ENCODE measurements at regions of chr17 and their contacts with region 1.

Region 1: GRCh38 chr17:72725433-72726068 is 366.9 kb downstream of the SLC39A11 start:
- DNase-seq: peak; percentile 61 to 78 (median 72)
- ATAC-seq: peak; percentile 88
- H3K4me3 ChIP-seq: no peak overlapping the region
- H3K4me1 ChIP-seq: peaks cover 5% of the 10 kb centered on the region
- CTCF ChIP-seq: peak; percentile 75

Region 2: DNA sequence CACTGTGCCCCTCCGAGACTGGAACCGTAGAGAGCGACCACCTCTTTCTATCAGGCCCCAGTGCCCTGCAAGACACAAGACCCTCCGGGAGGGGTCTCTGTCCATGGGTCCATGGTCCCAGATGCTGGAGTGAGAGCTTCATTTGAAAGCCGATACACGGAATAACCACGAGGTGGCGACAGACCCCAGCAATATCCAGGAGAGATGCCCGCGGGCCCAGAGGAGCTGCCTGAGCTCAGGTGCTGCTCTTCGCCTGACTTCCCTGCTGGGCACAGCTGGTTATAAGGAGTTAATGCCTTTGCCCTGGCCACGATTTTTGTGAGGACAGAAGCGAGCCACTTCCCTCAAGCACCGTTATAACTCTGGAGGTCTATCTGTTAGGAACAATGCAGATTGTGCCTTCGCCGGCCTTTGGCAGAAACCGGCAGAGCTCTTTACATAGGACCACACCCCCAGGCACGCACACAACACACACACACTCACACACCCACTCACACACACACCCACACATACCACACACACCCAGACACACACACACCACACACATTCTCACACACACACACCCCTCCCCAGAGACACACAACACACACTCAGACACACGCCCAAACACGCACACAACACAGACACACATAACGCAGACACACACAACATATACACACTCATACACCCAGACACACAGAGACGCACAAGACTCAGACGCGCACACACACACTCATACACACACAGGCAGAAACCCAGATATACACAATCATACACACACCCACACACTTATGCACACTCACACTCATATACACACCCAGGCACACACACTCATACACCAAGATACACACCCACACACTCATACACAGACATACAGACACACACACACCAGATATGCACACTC is 168.4 kb before region 1 on chr17:
- intact Hi-C with region 1: loop called in 1 of 2 experiments (anchors 10 kb)
- DNase-seq: peak in 2 of 3 donors; percentile 68 to 77
- ATAC-seq: peak; percentile 57
- H3K4me3 ChIP-seq: no peak overlapping the region
- H3K4me1 ChIP-seq: peaks cover 10% of the 10 kb centered on the region
- CTCF ChIP-seq: peak; percentile 58

Region 3: GRCh38 chr17:73156166-73156840 is 430.8 kb after region 1 on chr17:
- intact Hi-C with region 1: loop called in 1 of 2 experiments (anchors 5 kb)
- DNase-seq: peak; percentile 67 to 80 (median 77)
- ATAC-seq: peak; percentile 96
- H3K4me3 ChIP-seq: no peak overlapping the region
- H3K4me1 ChIP-seq: no peaks in the 10 kb centered on the region
- CTCF ChIP-seq: peak; percentile 57

Region 4: DNA sequence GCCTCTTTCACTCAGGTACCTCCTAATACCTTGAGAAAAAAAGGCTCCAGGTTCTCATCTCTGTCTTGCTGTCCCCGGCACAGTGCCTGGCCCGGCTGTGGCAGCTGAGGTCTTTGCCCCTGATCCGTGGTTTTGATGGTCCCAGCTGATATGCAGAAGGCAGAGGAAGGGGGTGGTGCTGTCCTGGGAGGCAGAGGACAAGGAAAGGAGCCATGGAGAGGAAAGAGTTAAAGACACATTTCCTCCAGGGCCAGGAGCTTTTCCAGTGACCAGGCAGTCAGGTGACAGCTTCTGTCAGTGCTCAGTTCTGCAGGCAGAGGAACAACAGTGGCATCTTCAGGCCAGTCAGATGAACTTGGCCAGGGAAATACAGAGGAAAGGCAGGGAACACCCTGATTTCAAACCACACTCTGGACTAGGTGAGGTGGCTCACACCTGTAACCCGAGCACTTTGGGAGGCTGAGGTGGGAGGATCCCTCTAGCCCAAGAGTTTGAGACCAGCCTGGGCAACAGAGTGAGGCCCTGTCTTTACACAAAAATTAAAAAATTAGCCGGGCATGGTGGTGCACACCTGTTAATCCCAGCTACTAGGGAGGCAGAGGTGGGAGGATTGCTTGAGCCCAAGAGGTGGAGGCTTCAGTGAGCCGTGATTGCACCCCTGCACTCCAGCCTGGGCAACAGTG is 464.0 kb after region 1 on chr17:
- intact Hi-C with region 1: loop called in 1 of 2 experiments (anchors 10 kb)
- DNase-seq: peak in 1 of 3 donors; percentile 55
- ATAC-seq: peak; percentile 36
- H3K4me3 ChIP-seq: no peak overlapping the region
- H3K4me1 ChIP-seq: peaks cover 24% of the 10 kb centered on the region
- CTCF ChIP-seq: no peak

Region 5: DNA sequence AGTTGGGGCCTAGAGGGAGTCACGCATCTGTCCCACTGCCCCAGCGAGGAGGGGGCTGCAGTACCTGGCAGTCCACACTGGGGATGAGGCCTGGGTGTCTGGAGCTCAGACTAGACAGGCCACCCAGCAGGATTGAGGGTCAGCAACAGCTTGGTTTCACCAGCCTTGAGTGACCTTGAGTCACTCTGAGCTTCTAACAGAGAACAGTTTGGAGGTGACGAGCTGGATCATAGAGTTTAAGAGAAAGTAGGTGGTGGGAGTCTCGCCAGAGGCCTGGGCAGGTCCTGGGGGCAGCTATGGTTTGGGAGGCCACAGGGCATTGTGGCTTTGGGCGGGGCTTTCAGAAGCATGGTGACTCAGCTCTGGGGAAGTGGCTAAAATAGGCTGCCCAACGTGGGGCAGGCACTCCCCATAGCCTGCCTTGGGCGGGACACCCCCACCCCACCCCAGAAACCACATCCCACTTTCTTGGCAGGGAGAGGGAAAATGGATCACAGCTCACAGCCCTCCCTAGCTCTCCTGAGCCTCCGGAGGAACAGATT is 565.8 kb after region 1 on chr17:
- intact Hi-C with region 1: no loop called
- DNase-seq: peak; percentile 52 to 83 (median 69)
- ATAC-seq: peak; percentile 66
- H3K4me3 ChIP-seq: no peak overlapping the region
- H3K4me1 ChIP-seq: peaks cover 59% of the 10 kb centered on the region
- CTCF ChIP-seq: no peak

Measured in mucosa of descending colon (tissue), 3 donors.